GM12878 (cell line): ENCODE measurements at regions of chr17 and their contacts with region 1.

Region 1: GRCh38 chr17:35041390-35041789 is 22.1 kb downstream of the RFFL start:
- DNase-seq: no peak
- ATAC-seq: peak; percentile 50
- H3K4me3 ChIP-seq: no peak overlapping the region
- H3K27ac ChIP-seq: no peak overlapping the region
- H3K4me1 ChIP-seq: peaks cover 20% of the 10 kb centered on the region
- H3K27me3 ChIP-seq: no peaks in the 10 kb centered on the region
- CTCF ChIP-seq: no peak
- EP300 ChIP-seq: no peak; a peak in 1 of 4 replicates
- POLR2A ChIP-seq: no peak
- RAD21 ChIP-seq: no peak

Region 2: GRCh38 chr17:35028531-35029262 is 12.7 kb before region 1 on chr17:
- CTCF ChIA-PET with region 1: interaction called, 5 read pairs
- POLR2A ChIA-PET with region 1: interaction called, 7 read pairs
- RAD21 ChIA-PET with region 1: interaction called, 12 read pairs
- SMC1A ChIA-PET with region 1: interaction called, 4 read pairs
- in situ Hi-C with region 1: no loop called
- intact Hi-C with region 1: no loop called
- DNase-seq: no peak
- ATAC-seq: peak; percentile 73
- H3K4me3 ChIP-seq: no peak overlapping the region
- H3K27ac ChIP-seq: peak overlapping the region; percentile 61; the same call in 1 of the 2 replicates
- H3K4me1 ChIP-seq: peaks cover 15% of the 10 kb centered on the region
- H3K27me3 ChIP-seq: no peaks in the 10 kb centered on the region
- CTCF ChIP-seq: no peak
- EP300 ChIP-seq: no peak
- POLR2A ChIP-seq: no peak
- RAD21 ChIP-seq: no peak

Region 3: DNA sequence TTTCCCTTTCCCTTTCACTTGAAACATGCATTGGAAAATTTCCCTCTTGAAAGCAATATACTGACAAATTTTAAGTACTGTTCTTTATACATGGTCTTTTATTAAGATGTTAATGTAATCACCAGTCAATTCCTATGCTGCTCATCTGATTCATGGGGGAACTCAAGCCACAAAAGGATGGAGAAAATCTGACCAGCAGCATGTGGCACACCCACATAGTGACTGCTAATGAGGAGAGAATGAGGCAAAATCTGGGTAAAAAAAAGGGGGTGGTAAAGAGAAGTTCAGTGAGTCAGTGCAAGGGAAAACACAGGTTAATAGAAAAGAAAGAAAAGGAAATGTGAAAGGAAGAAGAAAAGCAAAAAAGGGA is 10.8 kb after region 1 on chr17:
- CTCF ChIA-PET with region 1: interaction called, 6 read pairs
- POLR2A ChIA-PET with region 1: interaction called, 10 read pairs
- RAD21 ChIA-PET with region 1: interaction called, 3 read pairs
- SMC1A ChIA-PET with region 1: interaction called, 15 read pairs
- in situ Hi-C with region 1: no loop called
- intact Hi-C with region 1: no loop called
- DNase-seq: no peak
- ATAC-seq: peak; percentile 47
- H3K4me3 ChIP-seq: peak overlapping the region; percentile 4; the same call in 1 of the 2 replicates
- H3K27ac ChIP-seq: peak overlapping the region; percentile 93
- H3K4me1 ChIP-seq: peaks cover 27% of the 10 kb centered on the region
- H3K27me3 ChIP-seq: no peaks in the 10 kb centered on the region
- CTCF ChIP-seq: no peak
- EP300 ChIP-seq: no peak
- POLR2A ChIP-seq: no peak
- RAD21 ChIP-seq: no peak